Activated B cell treated with CpG ODN at 0.5 μM for 24 hours (primary cell): ENCODE measurements at regions of chr5 and their contacts with region 1.

Region 1: DNA sequence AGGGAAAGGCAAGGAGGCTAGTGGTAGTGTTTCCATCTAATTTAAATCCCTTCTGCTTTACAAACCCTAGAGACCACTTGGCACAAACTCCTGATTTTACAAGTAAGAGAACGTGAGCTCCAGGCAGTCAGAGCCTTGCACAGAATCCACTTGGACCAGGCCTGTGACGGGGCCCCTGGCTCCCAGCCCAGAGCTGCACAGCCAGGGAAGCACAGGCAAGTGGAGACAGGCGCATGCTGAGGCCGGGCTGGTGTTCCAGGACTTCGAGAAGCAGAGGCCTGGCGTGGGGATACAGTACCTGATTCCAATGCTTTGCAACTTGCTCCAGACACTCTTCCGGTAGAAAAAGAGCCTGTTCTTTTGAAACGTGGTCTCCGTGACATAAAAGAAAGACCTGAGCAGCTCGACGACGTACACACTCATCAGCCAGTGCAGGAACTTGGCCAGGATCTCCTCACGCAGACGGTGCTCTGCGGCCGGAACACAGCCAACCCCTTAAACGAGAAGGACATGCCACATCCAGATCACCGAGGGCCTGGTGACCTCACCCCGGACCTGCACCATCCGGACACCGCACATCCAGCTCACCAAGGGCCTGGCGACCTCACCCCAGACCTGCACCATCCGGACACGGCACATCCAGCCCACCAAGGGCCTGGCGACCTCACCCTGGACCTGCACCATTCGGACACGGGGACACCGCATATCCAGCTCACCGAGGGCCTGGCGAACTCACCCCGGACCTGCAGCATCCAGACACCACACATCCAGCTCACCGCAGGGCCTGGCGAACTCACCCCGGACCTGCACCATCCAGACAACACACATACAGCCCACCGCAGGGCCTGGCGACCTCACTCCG is 12.5 kb downstream of the TERT start:
- DNase-seq: no peak
- ATAC-seq: no peak
- H3K4me3 Mint-ChIP-seq: no peak overlapping the region
- H3K27ac Mint-ChIP-seq: no peak overlapping the region
- H3K4me1 Mint-ChIP-seq: no peaks in the 10 kb centered on the region
- H3K27me3 Mint-ChIP-seq: no peaks in the 10 kb centered on the region
- CTCF ChIP-seq: no peak

Region 2: GRCh38 chr5:1324301-1324700 is 41.9 kb after region 1 on chr5:
- CTCF ChIA-PET with region 1: no interaction called
- POLR2A ChIA-PET with region 1: interaction called, 17 read pairs
- intact Hi-C with region 1: no loop called
- DNase-seq: peak; percentile 9
- ATAC-seq: no peak
- H3K4me3 Mint-ChIP-seq: no peak overlapping the region
- H3K27ac Mint-ChIP-seq: no peak overlapping the region
- H3K4me1 Mint-ChIP-seq: no peaks in the 10 kb centered on the region
- H3K27me3 Mint-ChIP-seq: no peaks in the 10 kb centered on the region
- CTCF ChIP-seq: no peak